CD8-positive, alpha-beta T cell (primary cell): ENCODE measurements at regions of chr19 and their contacts with region 1.

Region 1: DNA sequence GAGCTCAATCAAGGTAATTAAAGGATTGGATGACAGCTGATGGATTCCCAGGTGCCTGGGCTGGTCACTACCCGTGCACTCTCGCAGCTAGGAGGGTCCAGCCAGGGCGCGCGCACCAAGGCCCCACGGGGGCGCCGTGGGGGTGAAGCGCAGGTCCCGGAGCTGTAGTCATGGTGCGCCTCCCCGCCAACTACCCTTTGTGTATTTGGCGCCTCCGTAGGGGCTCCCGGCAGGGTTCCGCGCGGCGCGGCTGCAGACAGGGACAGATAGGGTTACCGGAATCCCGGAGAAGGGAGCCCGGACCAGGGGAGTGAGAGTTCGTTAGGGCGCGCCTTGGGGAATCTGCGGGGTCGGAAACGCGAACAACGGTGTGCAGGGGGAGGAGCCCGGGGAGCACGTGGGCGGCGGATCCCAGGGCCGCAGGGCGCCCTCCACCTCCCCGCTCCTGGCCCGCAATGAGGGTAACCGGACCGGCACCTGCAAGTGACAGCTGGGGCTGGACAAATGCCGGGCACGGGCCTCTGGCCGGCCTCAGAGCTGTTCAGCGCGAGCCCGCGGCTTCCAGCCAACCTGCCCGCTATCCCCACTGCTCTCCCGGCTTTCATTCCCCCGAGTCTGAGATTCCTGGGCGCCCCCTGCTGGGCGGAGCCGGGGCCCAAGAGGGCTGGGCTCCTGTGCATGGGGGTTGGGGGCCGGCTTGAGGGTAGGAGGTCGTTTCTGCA is 3.4 kb upstream of the PRAM1 start:
- DNase-seq: peak in 8 of 9 experiments; percentile 54 to 85 (median 70)
- ATAC-seq: peak; percentile 78
- H3K4me3 ChIP-seq: peak overlapping the region; percentile 58 to 83
- H3K4me3 Mint-ChIP-seq: peak overlapping the region; percentile 91
- H3K27ac ChIP-seq: peak overlapping the region; percentile 32 to 43
- H3K27ac Mint-ChIP-seq: peak overlapping the region; percentile 87
- H3K4me1 ChIP-seq: peaks cover 19% of the 10 kb centered on the region
- H3K4me1 Mint-ChIP-seq: peaks cover 19% of the 10 kb centered on the region
- H3K27me3 ChIP-seq: no peaks in the 10 kb centered on the region
- H3K27me3 Mint-ChIP-seq: no peaks in the 10 kb centered on the region
- CTCF ChIP-seq: peak; percentile 45

Region 2: GRCh38 chr19:8194528-8195267 is 311.1 kb before region 1 on chr19:
- CTCF ChIA-PET with region 1: no interaction called
- POLR2A ChIA-PET with region 1: no interaction called
- intact Hi-C with region 1: no loop called
- DNase-seq: peak; percentile 23 to 79 (median 55)
- ATAC-seq: peak; percentile 63
- H3K4me3 ChIP-seq: peak overlapping the region in 1 of 2 experiments; percentile 1
- H3K4me3 Mint-ChIP-seq: peak overlapping the region; percentile 75
- H3K27ac ChIP-seq: peak overlapping the region; percentile 5 to 89
- H3K27ac Mint-ChIP-seq: peak overlapping the region; percentile 93
- H3K4me1 ChIP-seq: peaks cover 33% of the 10 kb centered on the region
- H3K4me1 Mint-ChIP-seq: peaks cover 44% of the 10 kb centered on the region
- H3K27me3 ChIP-seq: no peaks in the 10 kb centered on the region
- H3K27me3 Mint-ChIP-seq: no peaks in the 10 kb centered on the region
- CTCF ChIP-seq: no peak

Region 3: DNA sequence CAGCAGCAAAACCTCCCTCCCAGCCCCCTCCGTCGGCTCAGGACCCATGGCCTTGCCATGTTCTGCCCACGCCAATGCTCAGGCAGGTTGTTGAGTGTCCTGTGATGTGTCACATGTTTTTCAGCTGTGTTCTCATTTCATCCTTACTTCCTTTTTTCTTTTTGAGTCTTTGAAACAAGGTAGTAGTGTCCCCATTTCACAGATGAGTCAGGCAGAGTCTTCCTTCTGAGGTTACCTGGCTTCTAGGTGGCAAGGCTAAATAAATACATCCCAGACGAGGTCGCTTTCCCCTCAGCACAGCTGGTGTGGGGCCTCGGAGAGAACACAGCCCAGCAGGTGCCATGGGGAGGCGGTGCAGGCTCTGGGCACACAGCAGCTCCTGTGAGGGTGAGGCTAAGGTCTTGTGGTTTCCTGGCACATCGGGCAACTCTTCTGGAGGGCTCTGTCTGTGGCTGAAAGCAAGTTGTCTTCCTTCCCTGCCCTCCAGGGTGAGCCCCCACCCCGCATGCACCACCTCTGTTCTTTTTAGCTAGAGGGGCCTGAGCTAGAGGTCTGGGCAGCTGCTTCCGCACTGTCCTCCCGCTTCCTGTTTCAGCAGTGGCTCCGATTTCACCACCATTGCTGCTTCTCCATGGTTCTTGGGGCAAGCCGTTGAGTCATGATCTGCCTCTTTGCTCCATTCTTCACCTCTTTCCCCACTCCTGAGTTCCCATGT is 18.5 kb before region 1 on chr19:
- CTCF ChIA-PET with region 1: interaction called, 45 read pairs
- POLR2A ChIA-PET with region 1: interaction called, 6 read pairs
- intact Hi-C with region 1: loop called in 1 of 2 experiments (anchors 1 kb)
- DNase-seq: peak; percentile 29 to 83 (median 67)
- ATAC-seq: peak; percentile 82
- H3K4me3 ChIP-seq: no peak overlapping the region
- H3K4me3 Mint-ChIP-seq: peak overlapping the region; percentile 61
- H3K27ac ChIP-seq: peak overlapping the region in 1 of 2 experiments; percentile 57
- H3K27ac Mint-ChIP-seq: peak overlapping the region; percentile 91
- H3K4me1 ChIP-seq: peaks cover 27% of the 10 kb centered on the region
- H3K4me1 Mint-ChIP-seq: peaks cover 40% of the 10 kb centered on the region
- H3K27me3 ChIP-seq: no peaks in the 10 kb centered on the region
- H3K27me3 Mint-ChIP-seq: no peaks in the 10 kb centered on the region
- CTCF ChIP-seq: no peak

Region 4: GRCh38 chr19:8494158-8494557 is 11.7 kb before region 1 on chr19:
- CTCF ChIA-PET with region 1: interaction called, 45 read pairs
- POLR2A ChIA-PET with region 1: interaction called, 9 read pairs
- intact Hi-C with region 1: no loop called
- DNase-seq: peak in 1 of 9 experiments; percentile 42
- ATAC-seq: peak; percentile 58
- H3K4me3 ChIP-seq: peak overlapping the region in 1 of 2 experiments; percentile 27
- H3K4me3 Mint-ChIP-seq: peak overlapping the region; percentile 8
- H3K27ac ChIP-seq: peak overlapping the region; percentile 11 to 21
- H3K27ac Mint-ChIP-seq: peak overlapping the region; percentile 55
- H3K4me1 ChIP-seq: peaks cover 22% of the 10 kb centered on the region
- H3K4me1 Mint-ChIP-seq: peaks cover 25% of the 10 kb centered on the region
- H3K27me3 ChIP-seq: no peaks in the 10 kb centered on the region
- H3K27me3 Mint-ChIP-seq: no peaks in the 10 kb centered on the region
- CTCF ChIP-seq: no peak